ENCODE measurements at regions of chr14 and their contacts with region 1.

Region 1: DNA sequence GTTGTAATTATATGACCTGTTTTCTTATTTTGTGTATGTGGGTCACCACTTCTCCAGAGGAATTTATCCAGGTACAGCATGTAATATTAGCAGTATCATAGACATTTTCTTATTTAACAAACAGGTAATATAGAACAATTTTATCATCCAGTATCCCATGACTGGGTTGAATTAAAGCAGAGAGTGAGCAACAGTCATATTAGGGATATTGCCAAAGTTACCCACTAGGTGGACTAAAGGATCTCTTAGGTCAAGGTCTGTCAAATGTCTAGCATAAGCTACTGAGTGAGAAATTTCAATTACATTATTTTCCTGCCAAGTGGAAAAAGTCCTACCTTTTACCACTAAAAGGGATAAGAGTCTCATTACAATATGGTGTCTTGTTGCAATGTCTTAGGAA is 62.1 kb upstream of the TRIM9 start:
- DNase-seq: peak; percentile 75
- ATAC-seq: peak; percentile 98
- H3K4me3 ChIP-seq: no peak overlapping the region
- H3K27ac ChIP-seq: no peak overlapping the region
- H3K4me1 ChIP-seq: peaks cover 11% of the 10 kb centered on the region
- H3K27me3 ChIP-seq: no peaks in the 10 kb centered on the region
- CTCF ChIP-seq: peak; percentile 91

Region 2: GRCh38 chr14:50249136-50249800 is 907.7 kb before region 1 on chr14:
- CTCF ChIA-PET with region 1: no interaction called
- POLR2A ChIA-PET with region 1: no interaction called
- intact Hi-C with region 1: no loop called
- DNase-seq: no peak
- ATAC-seq: no peak
- H3K4me3 ChIP-seq: no peak overlapping the region
- H3K27ac ChIP-seq: no peak overlapping the region
- H3K4me1 ChIP-seq: no peaks in the 10 kb centered on the region
- H3K27me3 ChIP-seq: no peaks in the 10 kb centered on the region
- CTCF ChIP-seq: no peak

Region 3: GRCh38 chr14:51014086-51014485 is 142.9 kb before region 1 on chr14:
- CTCF ChIA-PET with region 1: interaction called, 3 read pairs
- POLR2A ChIA-PET with region 1: no interaction called
- intact Hi-C with region 1: loop called (anchors 2 kb)
- DNase-seq: peak; percentile 89
- ATAC-seq: peak; percentile 92
- H3K4me3 ChIP-seq: peak overlapping the region; percentile 26; the same call in 1 of the 2 replicates
- H3K27ac ChIP-seq: peak overlapping the region; percentile 91
- H3K4me1 ChIP-seq: peaks cover 21% of the 10 kb centered on the region
- H3K27me3 ChIP-seq: no peaks in the 10 kb centered on the region
- CTCF ChIP-seq: no peak

Region 4: GRCh38 chr14:51211149-51211548 is 54.1 kb after region 1 on chr14:
- CTCF ChIA-PET with region 1: interaction called, 12 read pairs
- POLR2A ChIA-PET with region 1: interaction called, 11 read pairs
- intact Hi-C with region 1: no loop called
- DNase-seq: peak; percentile 63
- ATAC-seq: peak; percentile 71
- H3K4me3 ChIP-seq: no peak overlapping the region
- H3K27ac ChIP-seq: no peak overlapping the region
- H3K4me1 ChIP-seq: peaks cover 7% of the 10 kb centered on the region; the same call in 1 of the 2 replicates
- H3K27me3 ChIP-seq: no peaks in the 10 kb centered on the region
- CTCF ChIP-seq: no peak

Region 5: DNA sequence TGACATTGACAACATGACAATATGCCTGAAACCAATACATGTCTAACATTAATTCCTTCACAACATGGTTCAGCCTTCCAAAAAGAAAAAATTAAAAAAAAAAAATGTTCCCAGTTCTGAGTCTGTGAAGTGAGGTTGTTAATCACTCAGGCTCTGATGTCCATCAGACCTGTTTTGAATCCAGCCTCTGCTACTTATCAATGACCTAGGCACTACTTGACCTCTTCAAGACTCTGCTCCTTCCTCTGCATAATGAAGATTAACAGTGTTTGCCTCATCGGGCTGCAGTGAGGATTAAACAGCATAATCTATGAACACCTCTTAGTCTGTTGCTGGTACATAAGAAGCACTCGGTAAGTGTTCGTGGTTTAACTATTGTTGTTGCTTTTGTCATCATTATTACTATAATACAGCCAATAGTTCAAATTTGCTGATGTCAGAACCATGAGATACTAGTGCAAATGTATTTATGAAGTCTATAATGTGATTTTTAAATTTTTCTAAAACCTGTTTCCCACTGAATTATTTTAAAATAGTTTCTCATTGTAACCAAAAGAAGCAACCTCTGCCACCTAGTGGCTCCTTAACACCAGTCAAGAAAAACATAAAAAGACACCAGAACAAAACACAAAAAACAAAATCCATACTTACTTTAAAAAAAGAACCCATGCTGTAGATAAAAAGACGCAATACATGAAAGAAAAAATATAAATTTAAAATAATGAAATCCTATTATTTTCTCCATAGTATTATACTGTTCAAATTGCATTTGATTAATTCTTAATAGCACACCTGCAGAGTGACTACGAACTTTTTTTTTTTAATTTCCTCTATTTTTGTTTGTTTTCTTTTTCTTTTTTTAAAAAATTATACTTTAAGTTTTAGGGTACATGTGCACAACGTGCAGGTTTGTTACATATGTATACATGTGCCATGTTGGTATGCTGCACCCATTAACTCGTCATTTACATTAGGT is 62.7 kb after region 1 on chr14:
- CTCF ChIA-PET with region 1: interaction called, 25 read pairs
- POLR2A ChIA-PET with region 1: no interaction called
- intact Hi-C with region 1: loop called (anchors 1 kb)
- DNase-seq: peak; percentile 63
- ATAC-seq: peak; percentile 65
- H3K4me3 ChIP-seq: no peak overlapping the region
- H3K27ac ChIP-seq: no peak overlapping the region
- H3K4me1 ChIP-seq: no peaks in the 10 kb centered on the region
- H3K27me3 ChIP-seq: no peaks in the 10 kb centered on the region
- CTCF ChIP-seq: peak; percentile 90

Measured in PC-3 (cell line).